Activated naive CD4-positive, alpha-beta T cell treated with anti-CD3 and anti-CD28 coated beads, Interleukin-2, amount 10 ng/mL, durations not matched to agents 7 days and 5 days (primary cell): ENCODE measurements at regions of chr6 and their contacts with region 1.

Region 1: DNA sequence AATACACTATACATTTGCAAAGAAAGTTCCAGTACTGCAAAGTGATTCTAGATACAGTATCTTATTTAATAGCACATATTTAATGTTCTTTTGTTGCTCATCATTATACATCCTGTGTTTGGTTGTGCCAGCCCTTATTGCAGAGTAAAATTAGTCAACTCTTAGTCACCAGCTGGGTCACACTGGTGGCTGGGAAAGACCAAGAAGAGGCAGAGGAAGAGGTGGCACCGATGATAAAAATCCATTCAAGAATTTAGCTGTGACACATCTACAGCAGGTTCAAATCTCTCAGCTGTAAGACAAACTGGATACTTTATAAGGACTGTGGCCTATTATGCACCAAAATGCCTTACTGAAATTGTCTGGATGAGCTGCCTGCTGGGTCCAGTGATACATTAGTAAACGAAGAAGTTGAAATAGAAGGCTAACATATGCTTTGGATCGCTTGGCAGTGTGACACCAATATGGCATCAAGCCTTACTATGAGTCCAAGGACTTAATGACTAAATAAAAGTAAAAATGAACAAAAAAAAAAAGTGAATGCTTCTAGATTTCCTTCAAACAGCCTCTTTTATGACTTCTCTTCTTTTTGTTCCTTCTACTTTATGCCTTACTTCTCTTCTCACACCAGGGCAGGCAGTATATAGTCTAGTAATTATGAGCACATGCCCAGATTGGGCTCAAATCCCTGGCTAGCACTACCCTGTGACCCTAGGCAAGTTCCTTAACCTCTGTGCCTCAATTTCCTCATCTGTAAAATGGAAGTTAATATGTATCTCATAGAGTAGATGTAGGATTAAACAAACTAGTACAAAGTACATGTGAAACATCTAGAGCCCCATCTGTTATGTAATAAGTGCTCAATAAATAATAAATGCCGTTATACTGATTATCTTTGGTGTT is 29.4 kb upstream of the RNF8 start:
- DNase-seq: no peak
- H3K4me3 Mint-ChIP-seq: no peak overlapping the region
- H3K27ac Mint-ChIP-seq: no peak overlapping the region
- H3K4me1 Mint-ChIP-seq: peaks cover 2% of the 10 kb centered on the region
- H3K27me3 Mint-ChIP-seq: no peaks in the 10 kb centered on the region

Region 2: DNA sequence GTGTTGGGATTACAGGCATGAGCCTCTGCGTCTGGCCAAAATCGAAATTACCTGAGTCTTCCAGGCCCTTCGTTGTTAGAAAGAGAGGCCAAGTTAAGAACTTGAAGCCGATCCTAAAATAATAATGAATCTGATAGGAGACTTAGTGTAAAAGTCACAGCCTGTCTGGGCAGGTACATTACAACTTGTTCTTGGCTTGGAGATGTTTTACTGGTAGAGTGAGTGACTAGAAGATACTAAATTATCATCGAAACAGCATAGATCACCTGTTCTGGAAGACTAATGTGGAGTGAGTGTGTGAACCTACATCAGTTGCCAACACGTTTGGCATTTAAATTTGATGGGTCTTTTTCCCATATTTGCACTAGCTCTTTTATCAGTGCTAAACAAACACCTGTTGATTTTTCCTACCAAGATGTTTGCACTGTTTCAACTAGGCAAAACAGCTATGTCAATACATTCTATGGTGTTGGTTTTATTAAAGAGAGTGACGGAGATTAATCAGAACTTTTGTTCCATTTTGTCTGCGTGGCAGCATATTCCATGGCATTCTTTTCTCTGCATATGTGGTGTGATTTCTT is 61.8 kb before region 1 on chr6:
- CTCF ChIA-PET with region 1: no interaction called
- DNase-seq: no peak
- H3K4me3 Mint-ChIP-seq: no peak overlapping the region
- H3K27ac Mint-ChIP-seq: no peak overlapping the region
- H3K4me1 Mint-ChIP-seq: peaks cover 64% of the 10 kb centered on the region
- H3K27me3 Mint-ChIP-seq: no peaks in the 10 kb centered on the region

Region 3: DNA sequence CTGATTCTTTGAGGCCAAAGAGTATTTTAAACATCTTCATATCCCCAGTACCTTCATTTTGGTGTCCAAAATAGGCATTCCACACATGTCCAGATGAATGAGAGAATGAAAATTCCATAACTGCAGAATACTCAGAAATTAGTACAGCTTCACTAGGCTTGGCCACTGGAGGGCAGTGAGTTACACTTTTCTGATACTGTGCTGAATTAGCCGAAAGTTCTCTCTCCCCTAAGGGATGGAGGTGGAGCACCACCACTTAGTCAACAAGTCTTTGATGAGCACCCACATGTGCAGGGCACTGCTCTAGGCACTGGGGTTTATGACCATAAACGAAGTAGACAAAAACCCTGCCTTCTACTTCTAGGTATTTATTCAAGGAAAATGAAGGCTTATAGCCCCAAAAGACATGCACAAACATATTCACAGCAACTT is 20.4 kb before region 1 on chr6:
- CTCF ChIA-PET with region 1: interaction called, 10 read pairs
- DNase-seq: peak; percentile 48
- H3K4me3 Mint-ChIP-seq: no peak overlapping the region
- H3K27ac Mint-ChIP-seq: peak overlapping the region; percentile 5
- H3K4me1 Mint-ChIP-seq: peaks cover 15% of the 10 kb centered on the region
- H3K27me3 Mint-ChIP-seq: no peaks in the 10 kb centered on the region

Region 4: DNA sequence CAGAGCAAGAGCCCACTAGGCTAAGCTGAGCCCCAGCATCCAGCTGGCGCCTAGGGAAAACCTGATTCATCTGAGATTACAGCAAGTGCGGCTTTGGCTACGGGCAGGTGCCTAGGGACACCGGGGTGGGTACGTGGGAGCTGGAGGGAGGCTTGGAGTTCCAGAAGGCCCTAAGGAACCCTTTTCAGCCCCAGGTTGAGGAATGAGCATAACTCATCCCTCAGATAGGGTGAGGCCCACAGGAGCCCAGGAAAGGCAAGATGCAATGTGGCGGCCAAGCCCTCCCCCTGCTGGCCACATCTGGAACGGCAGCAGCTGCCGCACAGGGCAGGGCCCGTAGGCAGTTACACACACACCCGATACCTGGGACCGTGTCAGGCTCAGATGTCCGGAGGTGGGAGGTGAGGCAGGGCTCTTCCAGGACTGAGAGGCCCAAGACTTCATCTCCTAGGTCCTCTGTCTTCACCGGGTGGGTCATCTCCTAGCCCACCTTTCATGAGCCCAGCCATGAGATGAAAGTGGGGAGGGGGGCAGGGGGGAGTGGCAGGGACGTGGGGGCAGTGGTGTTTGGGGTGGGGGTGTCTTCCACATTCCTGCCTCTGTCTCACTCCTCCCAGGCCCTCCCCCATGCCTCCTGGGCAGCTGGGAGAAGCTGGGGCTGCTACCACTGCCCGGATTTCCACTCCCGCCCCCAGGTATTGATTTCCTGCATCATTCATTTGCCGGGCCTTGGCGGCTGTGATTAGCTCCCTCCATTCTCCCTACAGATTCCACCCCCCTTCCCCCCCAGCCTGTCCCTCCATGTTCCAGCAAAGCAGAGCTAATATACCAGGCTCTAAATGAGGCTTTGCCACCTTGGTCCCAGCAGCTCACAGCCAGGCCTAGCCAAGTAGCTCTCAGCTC is 367.8 kb after region 1 on chr6:
- CTCF ChIA-PET with region 1: interaction called, 15 read pairs
- DNase-seq: peak; percentile 86
- H3K4me3 Mint-ChIP-seq: no peak overlapping the region
- H3K27ac Mint-ChIP-seq: no peak overlapping the region
- H3K4me1 Mint-ChIP-seq: peaks cover 30% of the 10 kb centered on the region
- H3K27me3 Mint-ChIP-seq: peaks cover 36% of the 10 kb centered on the region